Transverse colon (tissue), 4 donors: ENCODE measurements at regions of chrX and their contacts with region 1.

Region 1: GRCh38 chrX:65098851-65099250 is 122.6 kb upstream of the ZC4H2 start:
- DNase-seq: no peak
- H3K4me3 ChIP-seq: no peak overlapping the region
- H3K27ac ChIP-seq: no peak overlapping the region
- H3K4me1 ChIP-seq: no peaks in the 10 kb centered on the region
- H3K27me3 ChIP-seq: no peaks in the 10 kb centered on the region
- CTCF ChIP-seq: no peak
- EP300 ChIP-seq: no peak
- POLR2A ChIP-seq: no peak

Region 2: GRCh38 chrX:64976673-64977040 is 122.2 kb before region 1 on chrX:
- in situ Hi-C with region 1: no loop called
- intact Hi-C with region 1: no loop called
- DNase-seq: no peak
- H3K4me3 ChIP-seq: peak overlapping the region in 3 of 4 donors; percentile 45 to 74 (median 53)
- H3K27ac ChIP-seq: peak overlapping the region in 2 of 4 donors; percentile 54 to 72
- H3K4me1 ChIP-seq: peaks cover 0 to 5% (median 0%) of the 10 kb centered on the region in 4 donors
- H3K27me3 ChIP-seq: no peaks in the 10 kb centered on the region
- CTCF ChIP-seq: no peak
- EP300 ChIP-seq: no peak
- POLR2A ChIP-seq: no peak

Region 3: DNA sequence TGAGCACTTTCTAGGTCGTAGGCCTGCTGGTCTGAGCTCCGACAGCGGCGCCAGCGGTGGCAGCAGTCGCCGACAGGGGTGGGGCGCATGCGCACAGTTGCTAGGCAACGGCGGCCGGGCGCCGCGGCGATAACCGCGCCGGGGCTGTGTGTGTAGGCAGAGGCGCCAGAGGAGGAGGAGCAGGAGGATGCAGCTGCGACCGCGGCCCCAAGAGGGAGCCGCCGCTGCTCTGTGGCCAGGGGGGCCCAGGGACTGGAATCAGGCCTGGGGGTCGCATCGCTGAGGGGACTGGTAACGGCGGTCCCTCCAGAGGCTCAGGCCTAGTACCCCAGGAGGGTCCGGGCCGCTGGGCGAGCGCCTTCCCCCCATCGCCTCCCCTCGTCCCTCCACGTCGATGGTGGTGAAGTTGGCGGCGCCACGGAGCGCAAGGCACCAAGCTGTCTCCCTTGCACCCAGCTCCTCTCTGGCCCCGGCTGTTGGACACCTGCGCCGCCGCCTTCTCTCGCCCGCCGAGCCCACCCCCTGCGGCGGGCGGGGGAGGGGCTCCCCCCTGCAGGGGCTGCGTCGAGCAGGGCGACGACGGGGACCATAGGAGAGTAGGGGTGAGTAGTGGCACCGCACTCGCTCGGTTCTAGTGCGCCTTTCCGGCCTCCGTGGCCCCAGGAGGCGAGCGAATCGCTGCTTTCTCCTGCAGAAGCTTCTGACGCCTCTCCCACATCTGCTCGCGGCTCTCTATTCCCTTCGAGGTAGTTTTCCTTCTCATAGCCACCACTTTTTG is 64.0 kb before region 1 on chrX:
- in situ Hi-C with region 1: no loop called
- intact Hi-C with region 1: no loop called
- DNase-seq: peak; percentile 85
- H3K4me3 ChIP-seq: peak within 1 kb of the TSS; percentile 50 to 79 (median 64)
- H3K27ac ChIP-seq: peak within 1 kb of the TSS; percentile 85 to 93 (median 92)
- H3K4me1 ChIP-seq: peaks cover 0 to 11% (median 0%) of the 10 kb centered on the region in 4 donors
- H3K27me3 ChIP-seq: no peaks in the 10 kb centered on the region
- CTCF ChIP-seq: peak; percentile 48 to 73 (median 54)
- EP300 ChIP-seq: no peak
- POLR2A ChIP-seq: peak; percentile 59

Region 4: GRCh38 chrX:65463550-65463949 is 364.7 kb after region 1 on chrX:
- in situ Hi-C with region 1: no loop called
- intact Hi-C with region 1: loop called (anchors 5 kb)
- DNase-seq: no peak
- H3K4me3 ChIP-seq: no peak overlapping the region
- H3K27ac ChIP-seq: no peak overlapping the region
- H3K4me1 ChIP-seq: no peaks in the 10 kb centered on the region
- H3K27me3 ChIP-seq: no peaks in the 10 kb centered on the region
- CTCF ChIP-seq: no peak
- EP300 ChIP-seq: no peak
- POLR2A ChIP-seq: no peak

Region 5: DNA sequence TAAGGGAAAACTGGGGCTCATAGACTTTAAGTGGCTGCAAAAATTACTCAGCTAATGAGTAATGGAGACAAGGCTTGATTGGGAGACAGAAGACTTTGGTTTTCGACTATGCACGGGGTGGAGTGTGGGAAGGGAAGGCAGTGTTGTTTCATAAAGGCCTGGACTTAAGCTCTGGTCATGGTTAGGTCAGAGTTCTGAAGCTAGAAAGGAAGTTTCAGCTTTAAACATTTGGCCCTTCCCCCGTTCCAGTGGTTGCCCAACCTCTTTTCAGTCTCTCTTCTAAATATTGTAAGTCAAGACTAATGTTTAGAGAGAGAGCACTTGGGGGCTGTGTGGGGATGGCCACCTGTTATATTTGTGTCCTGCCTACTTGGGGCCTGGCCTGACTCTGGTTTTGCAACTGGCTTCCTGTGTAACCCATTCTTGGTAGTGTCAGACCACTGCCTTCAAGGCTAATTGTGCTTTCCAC is 589.6 kb after region 1 on chrX:
- in situ Hi-C with region 1: no loop called
- intact Hi-C with region 1: no loop called
- DNase-seq: peak; percentile 21
- H3K4me3 ChIP-seq: no peak overlapping the region
- H3K27ac ChIP-seq: peak overlapping the region; percentile 19 to 55 (median 40)
- H3K4me1 ChIP-seq: peaks cover 0 to 60% (median 5%) of the 10 kb centered on the region in 4 donors
- H3K27me3 ChIP-seq: no peaks in the 10 kb centered on the region
- CTCF ChIP-seq: no peak
- EP300 ChIP-seq: no peak
- POLR2A ChIP-seq: no peak